ENCODE measurements at regions of chr5 and their contacts with region 1.

Region 1: GRCh38 chr5:41270423-41271251 is 57.3 kb upstream of the C6 start:
- DNase-seq: peak; percentile 31
- ATAC-seq: peak; percentile 96

Region 2: DNA sequence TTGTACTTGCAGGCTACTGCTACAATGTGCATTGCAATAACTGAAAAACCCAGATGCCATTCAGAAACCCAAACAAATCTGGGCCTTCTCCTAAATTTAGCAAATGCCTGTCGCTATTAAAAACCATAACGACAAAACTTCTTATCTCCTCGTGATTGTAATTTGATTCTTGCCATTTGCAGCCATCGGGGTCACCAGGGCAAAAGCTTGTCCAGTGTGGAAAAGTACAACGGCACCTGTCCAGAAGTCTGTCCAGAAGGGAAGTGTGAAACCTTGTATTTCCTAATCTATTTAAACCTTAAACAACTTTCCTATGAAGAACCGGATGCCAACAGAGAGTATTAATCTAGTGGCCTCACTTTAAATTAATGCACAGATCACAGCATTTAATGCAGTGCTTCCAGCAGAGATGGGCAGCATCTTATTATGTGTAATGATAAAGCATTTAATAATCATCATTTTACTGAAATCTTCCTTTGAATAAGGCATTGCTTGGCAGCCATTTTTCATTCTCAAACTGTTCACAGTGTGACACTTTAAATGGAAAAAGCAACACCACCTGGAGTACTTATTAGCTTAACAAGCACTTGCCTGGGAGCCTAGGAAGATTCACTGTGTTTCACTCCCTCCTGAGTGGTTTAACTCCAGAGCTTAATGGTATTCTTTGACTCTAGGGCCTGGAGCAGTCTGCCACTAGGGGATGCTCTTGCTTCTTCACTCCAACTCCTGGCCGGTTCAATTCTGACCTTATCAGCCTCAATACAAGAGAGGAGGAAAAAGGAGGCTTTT is 366.2 kb before region 1 on chr5:
- intact Hi-C with region 1: loop called (anchors 10 kb)
- DNase-seq: peak; percentile 50
- ATAC-seq: peak; percentile 95

Region 3: GRCh38 chr5:41392016-41392415 is 121.4 kb after region 1 on chr5:
- intact Hi-C with region 1: no loop called
- DNase-seq: no peak
- ATAC-seq: peak; percentile 28

Region 4: GRCh38 chr5:41510176-41510831 is 239.7 kb after region 1 on chr5 and contains the start of gene PLCXD3:
- intact Hi-C with region 1: loop called (anchors 5 kb)
- DNase-seq: peak; percentile 77
- ATAC-seq: peak; percentile 95
- total RNA-seq, gene PLCXD3: 95.3 TPM

Measured in left ventricle myocardium superior (tissue), 1 donor.